ENCODE measurements at regions of chr7 and their contacts with region 1.

Region 1: GRCh38 chr7:5423844-5424688 is 432 bp upstream of the TNRC18 start:
- DNase-seq: peak; percentile 98
- H3K4me3 ChIP-seq: peak overlapping the region; percentile 84 to 96 (median 91)
- H3K27ac ChIP-seq: peak overlapping the region; percentile 97 to 100 (median 100)
- H3K4me1 ChIP-seq: peaks cover 2 to 23% (median 14%) of the 10 kb centered on the region in 4 donors
- H3K27me3 ChIP-seq: no peaks in the 10 kb centered on the region
- CTCF ChIP-seq: no peak
- EP300 ChIP-seq: peak in 1 of 4 donors; percentile 26
- POLR2A ChIP-seq: peak; percentile 65 to 79

Region 2: GRCh38 chr7:5694912-5695726 is 271.1 kb after region 1 on chr7:
- intact Hi-C with region 1: loop called (anchors 5 kb)
- DNase-seq: peak; percentile 90
- H3K4me3 ChIP-seq: peak overlapping the region; percentile 37 to 60 (median 44)
- H3K27ac ChIP-seq: peak overlapping the region; percentile 93 to 99 (median 94)
- H3K4me1 ChIP-seq: peaks cover 0 to 100% (median 95%) of the 10 kb centered on the region in 4 donors
- H3K27me3 ChIP-seq: no peaks in the 10 kb centered on the region
- CTCF ChIP-seq: no peak
- EP300 ChIP-seq: peak; percentile 74 to 95 (median 88)
- POLR2A ChIP-seq: peak; percentile 88 to 89

Measured in sigmoid colon (tissue), 7 donors.